Transverse colon (tissue), 4 donors: ENCODE measurements at regions of chr15 and their contacts with region 1.

Region 1: DNA sequence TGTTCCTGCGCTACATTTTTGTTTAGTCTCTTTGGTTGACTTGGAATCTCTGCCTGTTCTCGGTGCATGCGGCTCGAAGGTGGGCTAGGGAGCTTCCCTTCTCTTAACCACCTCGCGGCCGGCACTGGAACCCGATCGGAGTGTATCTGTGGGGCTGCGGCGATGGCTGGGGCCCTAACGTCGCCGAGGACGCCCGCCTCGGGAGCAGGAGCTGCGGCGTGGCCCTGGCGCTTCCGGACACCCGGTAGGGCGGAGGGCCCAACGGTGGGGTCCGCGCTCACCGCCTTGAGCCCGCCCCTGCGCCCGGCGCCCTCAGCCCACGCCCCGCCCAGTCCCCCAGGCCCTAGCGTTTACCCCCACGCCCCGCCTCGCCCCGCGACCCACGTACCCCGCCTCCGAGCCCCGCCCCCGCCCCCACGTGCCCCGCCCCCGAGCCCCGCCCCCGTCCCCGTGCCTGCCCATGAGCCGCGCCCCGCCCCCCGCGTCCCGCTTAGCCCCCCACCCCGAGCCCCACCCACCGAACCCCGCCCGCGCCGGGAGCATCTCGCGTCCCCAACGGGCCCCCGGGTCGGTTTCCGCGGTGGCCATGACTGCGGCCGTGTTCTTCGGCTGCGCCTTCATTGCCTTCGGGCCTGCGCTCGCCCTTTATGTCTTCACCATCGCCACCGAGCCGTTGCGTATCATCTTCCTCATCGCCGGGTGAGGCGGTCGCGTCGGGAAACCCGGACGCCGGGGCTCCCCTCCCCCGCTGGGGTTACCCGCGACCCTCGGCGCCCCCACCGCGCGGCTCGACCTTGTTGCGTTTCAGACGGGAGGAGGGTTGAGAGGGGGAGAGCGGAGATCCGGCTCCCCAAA is at the start of gene APH1B:
- DNase-seq: peak; percentile 90
- H3K4me3 ChIP-seq: peak within 1 kb of the TSS; percentile 64 to 84 (median 74)
- H3K27ac ChIP-seq: peak within 1 kb of the TSS; percentile 84 to 91 (median 88)
- H3K4me1 ChIP-seq: peaks cover 0 to 19% (median 8%) of the 10 kb centered on the region in 4 donors
- H3K27me3 ChIP-seq: no peaks in the 10 kb centered on the region
- CTCF ChIP-seq: peak in 2 of 5 experiments; percentile 22 to 27
- EP300 ChIP-seq: no peak
- POLR2A ChIP-seq: no peak
- total RNA-seq, gene APH1B: 0.80 to 9.7 (median 7.1) TPM

Region 2: GRCh38 chr15:63157118-63157843 is 120.0 kb before region 1 on chr15 and contains the start of gene RPS27L:
- in situ Hi-C with region 1: loop called in 2 of 4 experiments (anchors 10 to 25 kb)
- intact Hi-C with region 1: loop called (anchors 10 kb)
- DNase-seq: peak; percentile 94
- H3K4me3 ChIP-seq: peak within 1 kb of the TSS; percentile 65 to 76 (median 70)
- H3K27ac ChIP-seq: peak within 1 kb of the TSS; percentile 95 to 98 (median 96)
- H3K4me1 ChIP-seq: peaks cover 0 to 24% (median 18%) of the 10 kb centered on the region in 4 donors
- H3K27me3 ChIP-seq: no peaks in the 10 kb centered on the region
- CTCF ChIP-seq: no peak
- EP300 ChIP-seq: no peak
- POLR2A ChIP-seq: peak; percentile 97
- total RNA-seq, gene RPS27L: 4.5 to 143 (median 58.5) TPM

Region 3: GRCh38 chr15:63166219-63166618 is 111.0 kb before region 1 on chr15:
- in situ Hi-C with region 1: loop called in 2 of 4 experiments (anchors 10 to 25 kb)
- intact Hi-C with region 1: no loop called
- DNase-seq: no peak
- H3K4me3 ChIP-seq: no peak overlapping the region
- H3K27ac ChIP-seq: no peak overlapping the region
- H3K4me1 ChIP-seq: no peaks in the 10 kb centered on the region
- H3K27me3 ChIP-seq: no peaks in the 10 kb centered on the region
- CTCF ChIP-seq: no peak
- EP300 ChIP-seq: no peak
- POLR2A ChIP-seq: no peak

Region 4: DNA sequence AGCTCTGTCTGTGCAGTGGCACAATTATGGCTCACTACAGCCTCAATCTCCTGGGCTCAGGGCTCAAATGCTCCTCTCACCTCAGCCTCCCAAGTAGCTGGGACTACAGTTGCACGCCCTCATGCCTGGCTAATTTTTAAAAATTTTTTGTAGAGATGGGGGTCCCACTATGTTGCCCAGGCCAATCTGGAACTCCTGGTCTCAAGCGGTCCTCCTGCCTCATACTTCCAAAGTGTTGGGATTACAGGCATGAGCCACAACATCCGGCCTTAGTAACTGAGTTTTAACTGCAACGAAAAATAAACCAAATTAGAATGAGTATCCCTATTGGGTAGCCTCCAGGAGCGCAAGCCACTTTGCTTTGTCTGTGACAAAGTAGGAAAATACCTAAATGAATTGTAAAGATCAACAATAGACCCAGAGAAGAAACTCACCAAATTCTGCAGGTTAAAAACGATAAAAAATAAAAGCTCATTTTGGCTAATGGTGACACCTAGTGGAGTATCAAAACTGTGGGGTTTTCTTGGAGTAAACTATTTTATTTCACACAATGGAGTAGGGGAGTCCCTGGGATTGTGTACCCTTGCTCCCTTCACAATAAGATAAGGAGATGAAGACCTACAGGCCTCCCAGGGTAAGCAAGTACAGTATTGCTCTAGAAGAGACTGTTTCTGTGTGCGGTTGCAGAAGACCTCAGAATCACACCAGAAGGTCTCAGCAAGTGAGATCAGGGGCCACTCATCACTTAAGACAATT is 125.4 kb after region 1 on chr15:
- in situ Hi-C with region 1: loop called in 1 of 4 experiments (anchors 25 kb)
- intact Hi-C with region 1: no loop called
- DNase-seq: no peak
- H3K4me3 ChIP-seq: no peak overlapping the region
- H3K27ac ChIP-seq: no peak overlapping the region
- H3K4me1 ChIP-seq: peaks cover 0 to 13% (median 0%) of the 10 kb centered on the region in 4 donors
- H3K27me3 ChIP-seq: no peaks in the 10 kb centered on the region
- CTCF ChIP-seq: peak; percentile 60 to 62 (median 61)
- EP300 ChIP-seq: no peak
- POLR2A ChIP-seq: no peak